Caco-2 (cell line): ENCODE measurements at regions of chr19 and their contacts with region 1.

Region 1: GRCh38 chr19:3557461-3558248 is at the start of gene MFSD12:
- DNase-seq: peak; percentile 91 to 94
- H3K4me3 ChIP-seq: peak within 1 kb of the TSS; percentile 90
- H3K4me3 Mint-ChIP-seq: peak within 1 kb of the TSS; percentile 99
- H3K27ac Mint-ChIP-seq: peak within 1 kb of the TSS; percentile 91
- H3K4me1 ChIP-seq: no peaks in the 10 kb centered on the region
- H3K4me1 Mint-ChIP-seq: peaks cover 10% of the 10 kb centered on the region
- H3K27me3 ChIP-seq: no peaks in the 10 kb centered on the region
- H3K27me3 Mint-ChIP-seq: no peaks in the 10 kb centered on the region
- CTCF ChIP-seq: no peak
- total RNA-seq, gene MFSD12: 60.6 and 61.7 TPM in 2 replicates

Region 2: GRCh38 chr19:3572132-3572854 is 14.6 kb after region 1 on chr19:
- CTCF ChIA-PET with region 1: interaction called, 3 read pairs
- POLR2A ChIA-PET with region 1: no interaction called
- intact Hi-C with region 1: loop called (anchors 1 kb)
- DNase-seq: peak; percentile 98 to 99
- H3K4me3 ChIP-seq: peak overlapping the region; percentile 36
- H3K4me3 Mint-ChIP-seq: peak overlapping the region; percentile 71
- H3K27ac Mint-ChIP-seq: no peak overlapping the region
- H3K4me1 ChIP-seq: no peaks in the 10 kb centered on the region
- H3K4me1 Mint-ChIP-seq: no peaks in the 10 kb centered on the region
- H3K27me3 ChIP-seq: no peaks in the 10 kb centered on the region
- H3K27me3 Mint-ChIP-seq: no peaks in the 10 kb centered on the region
- CTCF ChIP-seq: no peak

Region 3: GRCh38 chr19:3626473-3627350 is 69.1 kb after region 1 on chr19 and contains the start of gene CACTIN:
- CTCF ChIA-PET with region 1: no interaction called
- POLR2A ChIA-PET with region 1: no interaction called
- intact Hi-C with region 1: loop called (anchors 10 kb)
- DNase-seq: peak; percentile 98 to 99
- H3K4me3 ChIP-seq: peak within 1 kb of the TSS; percentile 98
- H3K4me3 Mint-ChIP-seq: peak within 1 kb of the TSS; percentile 92
- H3K27ac Mint-ChIP-seq: peak within 1 kb of the TSS; percentile 98
- H3K4me1 ChIP-seq: no peaks in the 10 kb centered on the region
- H3K4me1 Mint-ChIP-seq: peaks cover 7% of the 10 kb centered on the region
- H3K27me3 ChIP-seq: no peaks in the 10 kb centered on the region
- H3K27me3 Mint-ChIP-seq: no peaks in the 10 kb centered on the region
- CTCF ChIP-seq: no peak
- total RNA-seq, gene CACTIN: 32.2 and 33.9 TPM in 2 replicates

Region 4: DNA sequence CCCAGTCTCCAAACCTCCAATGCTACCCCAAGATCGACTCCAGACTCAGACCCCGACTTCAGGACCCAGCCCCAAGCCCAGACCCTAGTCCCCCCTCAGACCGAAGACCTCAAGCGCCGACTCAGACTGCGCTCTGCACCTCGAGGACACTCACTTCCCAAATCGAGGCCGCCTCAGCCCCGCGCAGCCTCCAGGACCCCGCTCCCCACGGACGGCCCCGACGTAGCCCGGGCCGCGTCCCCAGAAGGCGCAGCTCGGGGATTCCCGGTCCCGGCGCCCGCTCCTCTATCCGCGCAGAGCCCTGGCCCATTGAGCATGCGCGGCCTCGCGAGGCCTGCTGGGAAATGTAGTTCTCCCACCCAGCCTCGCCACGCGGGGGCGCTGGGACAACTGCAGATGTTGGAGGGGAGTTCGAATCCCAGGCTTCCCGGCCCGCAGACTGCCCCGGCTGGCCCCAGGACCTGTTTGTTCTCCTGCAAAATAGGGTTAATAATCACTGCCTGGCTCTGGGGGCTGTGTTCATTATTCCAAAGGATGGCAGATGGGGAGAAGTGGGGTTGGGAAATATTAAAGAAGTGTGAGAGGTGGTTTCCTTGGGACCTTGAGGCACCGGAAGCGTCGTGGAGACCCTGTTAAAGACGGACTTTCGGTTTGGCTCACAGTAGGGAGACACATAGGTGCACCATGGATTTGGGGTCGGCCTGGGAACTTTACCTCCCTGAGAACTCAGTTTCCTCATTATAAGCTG is 203.9 kb after region 1 on chr19 and contains the start of gene APBA3:
- CTCF ChIA-PET with region 1: no interaction called
- POLR2A ChIA-PET with region 1: no interaction called
- intact Hi-C with region 1: no loop called
- DNase-seq: peak; percentile 88 to 94
- H3K4me3 ChIP-seq: peak within 1 kb of the TSS; percentile 68
- H3K4me3 Mint-ChIP-seq: peak within 1 kb of the TSS; percentile 96
- H3K27ac Mint-ChIP-seq: peak within 1 kb of the TSS; percentile 99
- H3K4me1 ChIP-seq: peaks cover 4% of the 10 kb centered on the region
- H3K4me1 Mint-ChIP-seq: peaks cover 8% of the 10 kb centered on the region
- H3K27me3 ChIP-seq: no peaks in the 10 kb centered on the region
- H3K27me3 Mint-ChIP-seq: no peaks in the 10 kb centered on the region
- CTCF ChIP-seq: peak; percentile 72 to 84
- total RNA-seq, gene APBA3: 22.1 and 23.5 TPM in 2 replicates